Calu3 (cell line): ENCODE measurements at regions of chr10 and their contacts with region 1.

Region 1: GRCh38 chr10:77251297-77252013 is 386.2 kb downstream of the KCNMA1 start:
- DNase-seq: peak; percentile 62
- H3K4me3 Mint-ChIP-seq: no peak overlapping the region
- H3K27ac Mint-ChIP-seq: no peak overlapping the region
- H3K4me1 Mint-ChIP-seq: peaks cover 13% of the 10 kb centered on the region
- H3K27me3 Mint-ChIP-seq: peaks cover 17% of the 10 kb centered on the region
- CTCF ChIP-seq: peak; percentile 70

Region 2: GRCh38 chr10:77173615-77174461 is 77.6 kb before region 1 on chr10:
- CTCF ChIA-PET with region 1: interaction called, 5 read pairs
- intact Hi-C with region 1: loop called (anchors 2 kb)
- DNase-seq: peak; percentile 83
- H3K4me3 Mint-ChIP-seq: no peak overlapping the region
- H3K27ac Mint-ChIP-seq: no peak overlapping the region
- H3K4me1 Mint-ChIP-seq: peaks cover 5% of the 10 kb centered on the region
- H3K27me3 Mint-ChIP-seq: no peaks in the 10 kb centered on the region
- CTCF ChIP-seq: peak; percentile 82

Region 3: GRCh38 chr10:77391605-77392235 is 140.3 kb after region 1 on chr10:
- CTCF ChIA-PET with region 1: interaction called, 4 read pairs
- intact Hi-C with region 1: loop called (anchors 5 kb)
- DNase-seq: peak; percentile 86
- H3K4me3 Mint-ChIP-seq: no peak overlapping the region
- H3K27ac Mint-ChIP-seq: no peak overlapping the region
- H3K4me1 Mint-ChIP-seq: peaks cover 9% of the 10 kb centered on the region
- H3K27me3 Mint-ChIP-seq: peaks cover 56% of the 10 kb centered on the region
- CTCF ChIP-seq: peak; percentile 35

Region 4: GRCh38 chr10:77501152-77501845 is 249.8 kb after region 1 on chr10:
- CTCF ChIA-PET with region 1: interaction called, 4 read pairs
- intact Hi-C with region 1: loop called (anchors 10 kb)
- DNase-seq: no peak
- H3K4me3 Mint-ChIP-seq: no peak overlapping the region
- H3K27ac Mint-ChIP-seq: no peak overlapping the region
- H3K4me1 Mint-ChIP-seq: peaks cover 15% of the 10 kb centered on the region
- H3K27me3 Mint-ChIP-seq: peaks cover 27% of the 10 kb centered on the region
- CTCF ChIP-seq: no peak

Region 5: DNA sequence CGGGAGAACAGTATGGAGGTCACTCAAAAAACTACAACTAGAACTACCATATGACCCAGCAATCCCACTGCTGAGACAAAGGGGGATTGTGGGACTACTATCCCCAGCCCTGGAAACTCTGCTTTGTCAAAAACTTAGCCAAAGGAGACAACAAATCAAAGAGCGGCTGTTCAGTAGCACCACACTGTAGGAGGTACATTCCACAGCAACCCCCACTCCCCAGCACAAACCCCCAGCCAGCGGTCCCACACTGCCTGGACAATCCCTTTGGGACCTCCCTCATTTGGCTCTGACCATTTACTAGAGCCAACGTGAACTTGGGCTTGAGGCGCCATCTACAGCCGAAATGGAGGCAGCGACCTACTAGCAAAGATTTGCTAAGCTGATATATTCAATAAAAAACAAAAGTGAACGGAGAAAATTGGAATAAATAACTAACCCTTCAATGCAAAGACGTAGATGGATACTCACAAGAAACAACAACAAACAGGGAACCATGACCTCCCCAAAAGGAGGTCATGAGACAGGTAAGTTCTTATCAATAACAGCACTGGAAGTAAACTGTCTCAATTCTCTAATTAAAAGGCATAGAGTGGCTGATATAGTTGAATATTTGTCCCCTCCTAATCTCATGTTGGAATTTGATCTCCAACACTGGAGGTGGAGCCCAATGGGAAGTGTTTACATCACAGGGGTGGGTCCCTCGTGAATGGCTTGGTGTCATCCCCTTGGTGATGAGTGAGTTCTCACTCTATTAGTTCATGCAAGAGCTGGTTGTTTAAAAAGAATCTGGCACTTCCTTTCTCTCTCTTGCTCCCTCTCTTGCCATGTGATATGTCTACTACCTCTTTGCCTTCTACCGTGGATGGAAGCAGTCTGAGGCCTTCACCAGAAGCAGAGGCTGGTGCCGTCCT is 505.1 kb after region 1 on chr10:
- CTCF ChIA-PET with region 1: no interaction called
- intact Hi-C with region 1: loop called (anchors 10 kb)
- DNase-seq: peak; percentile 64
- H3K4me3 Mint-ChIP-seq: no peak overlapping the region
- H3K27ac Mint-ChIP-seq: no peak overlapping the region
- H3K4me1 Mint-ChIP-seq: peaks cover 11% of the 10 kb centered on the region
- H3K27me3 Mint-ChIP-seq: no peaks in the 10 kb centered on the region
- CTCF ChIP-seq: peak; percentile 86